Naive thymus-derived CD4-positive, alpha-beta T cell (primary cell): ENCODE measurements at regions of chr16 and their contacts with region 1.

Region 1: DNA sequence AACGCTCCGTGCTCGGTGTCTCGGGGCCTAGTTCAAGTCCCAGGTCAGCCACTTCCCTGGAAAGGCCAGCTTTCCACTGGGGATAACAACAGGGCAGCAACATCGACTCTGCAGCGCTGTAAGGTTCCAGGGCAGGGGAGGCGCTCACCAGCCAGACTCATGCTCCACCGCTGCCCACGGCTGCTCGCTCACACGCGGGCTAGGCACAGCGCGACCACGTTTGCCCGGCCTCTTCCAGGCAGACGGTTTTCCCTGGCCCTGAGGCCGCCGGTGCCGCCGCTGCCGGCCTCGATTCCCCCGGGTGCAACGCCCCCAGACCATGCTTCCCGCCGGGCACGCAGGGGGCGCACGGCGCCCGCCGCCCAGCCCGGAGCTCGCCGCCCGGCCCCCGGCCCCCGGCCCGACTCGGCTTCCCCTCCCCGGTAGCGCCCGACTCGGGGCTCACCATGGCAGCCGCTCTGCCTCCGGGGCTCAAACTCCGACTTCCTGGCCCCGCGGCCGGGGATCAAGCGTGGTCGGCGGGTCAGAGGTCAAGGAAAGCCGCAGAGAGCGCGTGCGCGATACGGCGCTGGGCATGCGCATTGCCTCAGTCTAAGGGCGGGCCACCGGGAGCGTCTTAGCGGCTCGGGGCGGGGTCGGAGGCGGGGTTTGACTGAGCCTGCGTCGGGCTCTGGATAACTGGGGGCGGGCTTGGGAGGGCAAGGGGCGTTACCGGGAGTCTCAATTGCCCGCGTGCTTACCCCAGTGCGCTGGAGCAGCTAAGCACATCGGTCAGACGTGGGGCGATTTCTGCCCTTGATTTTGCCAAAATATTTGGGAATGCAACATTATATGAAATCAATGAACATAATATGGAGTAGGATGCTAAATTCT is at the start of gene PAM16:
- DNase-seq: peak; percentile 95 to 99 (median 98)
- ATAC-seq: peak; percentile 93
- H3K4me3 ChIP-seq: peak within 1 kb of the TSS; percentile 91
- H3K4me3 Mint-ChIP-seq: peak within 1 kb of the TSS; percentile 90 to 98 (median 94)
- H3K27ac ChIP-seq: peak within 1 kb of the TSS; percentile 87
- H3K27ac Mint-ChIP-seq: peak within 1 kb of the TSS; percentile 76 to 95 (median 92)
- H3K4me1 ChIP-seq: peaks cover 5 to 7% of the 10 kb centered on the region in 2 donors
- H3K4me1 Mint-ChIP-seq: peaks cover 11 to 38% (median 32%) of the 10 kb centered on the region in 7 donors
- H3K27me3 ChIP-seq: no peaks in the 10 kb centered on the region
- H3K27me3 Mint-ChIP-seq: no peaks in the 10 kb centered on the region
- total RNA-seq, gene PAM16: 34.1 to 46.2 (median 45.0) TPM

Region 2: GRCh38 chr16:3182608-3183444 is 1168.2 kb before region 1 on chr16:
- CTCF ChIA-PET with region 1: no interaction called
- POLR2A ChIA-PET with region 1: no interaction called
- intact Hi-C with region 1: no loop called
- DNase-seq: peak in 5 of 9 donors; percentile 32 to 71 (median 43)
- ATAC-seq: peak; percentile 41
- H3K4me3 ChIP-seq: peak overlapping the region; percentile 58
- H3K4me3 Mint-ChIP-seq: peak overlapping the region; percentile 72 to 86 (median 79)
- H3K27ac ChIP-seq: no peak overlapping the region
- H3K27ac Mint-ChIP-seq: peak overlapping the region in 7 of 9 donors; percentile 22 to 86 (median 49)
- H3K4me1 ChIP-seq: peaks cover 8 to 16% of the 10 kb centered on the region in 2 donors
- H3K4me1 Mint-ChIP-seq: peaks cover 24 to 38% (median 27%) of the 10 kb centered on the region in 7 donors
- H3K27me3 ChIP-seq: peaks cover 4 to 26% of the 10 kb centered on the region in 2 donors
- H3K27me3 Mint-ChIP-seq: peaks cover 77 to 88% (median 81%) of the 10 kb centered on the region in 5 donors

Region 3: DNA sequence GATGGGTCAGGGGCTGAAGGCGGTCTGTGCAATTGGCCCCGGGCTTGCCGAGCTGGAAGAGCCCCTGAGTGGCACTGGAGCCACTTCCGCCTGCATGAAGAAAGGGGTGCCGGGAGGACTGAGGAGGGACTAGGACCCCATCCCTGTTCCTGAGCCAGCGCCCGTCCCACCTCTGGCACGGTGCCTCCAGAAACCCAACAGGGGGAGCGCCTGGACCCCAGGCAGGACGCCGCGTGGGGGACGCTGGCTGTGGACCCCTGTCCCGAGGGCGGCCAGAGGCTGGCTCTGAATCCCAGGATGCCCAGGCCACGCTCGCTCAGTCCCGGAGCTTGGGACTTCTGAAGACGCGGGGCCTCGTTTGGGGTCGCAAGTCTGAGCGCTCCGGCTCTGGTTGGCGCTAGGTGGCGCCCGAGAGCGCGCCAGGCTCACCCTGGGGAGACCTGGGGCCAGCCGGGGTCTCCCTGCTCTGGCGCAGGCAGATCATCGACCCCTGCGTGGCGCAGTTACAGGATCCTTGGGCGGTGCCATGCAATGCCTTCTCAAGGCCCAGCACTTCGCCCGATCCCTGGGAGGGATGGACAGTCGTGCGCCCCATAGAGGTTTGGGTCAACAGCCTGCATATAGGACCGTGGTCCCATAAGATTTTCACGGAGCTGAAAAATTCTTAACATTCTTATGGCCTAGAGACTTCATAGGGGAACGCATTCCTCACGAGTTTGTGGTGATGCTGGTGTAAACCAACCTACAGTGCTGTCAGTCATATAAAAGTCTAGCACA is 412.0 kb before region 1 on chr16:
- CTCF ChIA-PET with region 1: no interaction called
- POLR2A ChIA-PET with region 1: no interaction called
- intact Hi-C with region 1: no loop called
- DNase-seq: peak; percentile 39 to 79 (median 63)
- ATAC-seq: peak; percentile 89
- H3K4me3 ChIP-seq: peak overlapping the region; percentile 35
- H3K4me3 Mint-ChIP-seq: peak overlapping the region; percentile 5 to 75 (median 52)
- H3K27ac ChIP-seq: no peak overlapping the region
- H3K27ac Mint-ChIP-seq: no peak overlapping the region
- H3K4me1 ChIP-seq: no peaks in the 10 kb centered on the region
- H3K4me1 Mint-ChIP-seq: peaks cover 0 to 4% (median 0%) of the 10 kb centered on the region in 7 donors
- H3K27me3 ChIP-seq: no peaks in the 10 kb centered on the region
- H3K27me3 Mint-ChIP-seq: peaks cover 0 to 7% (median 0%) of the 10 kb centered on the region in 5 donors

Region 4: DNA sequence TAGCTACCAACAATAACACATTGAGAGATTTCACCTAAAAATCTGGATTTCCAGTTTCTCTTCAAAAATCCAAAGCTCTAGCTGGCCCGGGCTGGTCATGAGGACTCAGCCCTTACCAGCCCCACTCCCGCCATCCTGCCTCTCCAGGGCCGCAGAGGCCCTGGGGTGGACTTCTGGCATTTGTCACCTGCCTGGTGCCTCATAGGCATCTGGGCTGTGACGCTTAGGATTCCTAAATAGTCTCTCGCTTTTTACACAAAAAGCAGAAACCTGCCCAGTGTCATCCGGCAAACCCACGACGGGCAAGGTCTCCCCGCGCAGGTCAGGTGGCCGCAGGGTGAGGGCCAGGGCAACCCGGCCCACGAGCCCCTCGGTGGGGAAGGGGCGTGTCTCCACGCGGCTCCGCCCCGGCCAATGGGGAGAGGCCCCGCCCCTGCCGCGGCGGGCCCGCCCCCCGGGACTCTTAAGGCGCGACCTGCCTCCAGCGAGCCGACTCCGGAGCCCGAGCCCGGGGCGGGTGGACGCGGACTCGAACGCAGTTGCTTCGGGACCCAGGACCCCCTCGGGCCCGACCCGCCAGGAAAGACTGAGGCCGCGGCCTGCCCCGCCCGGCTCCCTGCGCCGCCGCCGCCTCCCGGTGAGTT is 20.5 kb after region 1 on chr16 and contains the start of gene VASN:
- CTCF ChIA-PET with region 1: no interaction called
- POLR2A ChIA-PET with region 1: no interaction called
- intact Hi-C with region 1: loop called (anchors 1 kb)
- DNase-seq: peak; percentile 68 to 84 (median 78)
- ATAC-seq: peak; percentile 89
- H3K4me3 ChIP-seq: peak within 1 kb of the TSS; percentile 51
- H3K4me3 Mint-ChIP-seq: peak within 1 kb of the TSS; percentile 61 to 88 (median 81)
- H3K27ac ChIP-seq: peak within 1 kb of the TSS; percentile 58
- H3K27ac Mint-ChIP-seq: peak within 1 kb of the TSS in 6 of 9 donors; percentile 43 to 74 (median 66)
- H3K4me1 ChIP-seq: peaks cover 15 to 19% of the 10 kb centered on the region in 2 donors
- H3K4me1 Mint-ChIP-seq: peaks cover 0 to 24% (median 12%) of the 10 kb centered on the region in 7 donors
- H3K27me3 ChIP-seq: no peaks in the 10 kb centered on the region
- H3K27me3 Mint-ChIP-seq: no peaks in the 10 kb centered on the region
- total RNA-seq, gene VASN: 0.24 to 1.3 (median 0.45) TPM in 4 of 5 experiments, not detected in the other

Region 5: DNA sequence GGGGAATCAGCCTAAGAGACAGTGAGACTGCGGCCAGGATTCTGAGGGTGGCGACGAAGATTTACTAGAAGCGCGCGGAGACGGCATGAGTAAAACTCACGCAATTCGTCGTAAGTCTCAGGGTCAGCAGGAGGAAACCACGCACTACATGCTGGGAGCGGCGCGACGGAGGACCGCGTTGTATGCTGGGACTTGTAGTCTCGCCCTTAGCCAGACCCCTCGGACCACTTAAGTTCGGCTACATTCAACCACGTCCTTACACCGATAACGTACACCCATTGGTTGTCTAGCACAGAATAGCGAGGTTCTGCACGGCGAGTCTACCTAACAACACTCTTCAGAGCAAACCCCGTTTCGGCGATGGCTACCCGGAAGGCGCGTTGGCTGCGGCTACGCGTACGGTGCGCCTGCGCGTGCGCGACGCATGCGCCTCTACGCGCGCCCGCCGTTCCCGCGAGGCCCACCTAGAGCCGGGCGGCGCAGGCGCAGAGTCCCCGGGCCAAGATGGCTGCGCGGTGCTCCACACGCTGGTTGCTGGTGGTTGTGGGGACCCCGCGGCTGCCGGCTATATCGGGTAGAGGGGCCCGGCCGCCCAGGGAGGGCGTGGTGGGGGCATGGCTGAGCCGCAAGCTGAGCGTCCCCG is 74.5 kb after region 1 on chr16 and contains the start of gene DNAJA3:
- CTCF ChIA-PET with region 1: no interaction called
- POLR2A ChIA-PET with region 1: no interaction called
- intact Hi-C with region 1: loop called in 1 of 2 experiments (anchors 2 kb)
- DNase-seq: peak; percentile 91 to 97 (median 95)
- ATAC-seq: peak; percentile 93
- H3K4me3 ChIP-seq: peak within 1 kb of the TSS; percentile 97
- H3K4me3 Mint-ChIP-seq: peak within 1 kb of the TSS; percentile 92 to 99 (median 98)
- H3K27ac ChIP-seq: peak within 1 kb of the TSS; percentile 95
- H3K27ac Mint-ChIP-seq: peak within 1 kb of the TSS; percentile 99 to 100 (median 100)
- H3K4me1 ChIP-seq: peaks cover 18% of the 10 kb centered on the region in 2 donors
- H3K4me1 Mint-ChIP-seq: peaks cover 26 to 37% (median 31%) of the 10 kb centered on the region in 7 donors
- H3K27me3 ChIP-seq: no peaks in the 10 kb centered on the region
- H3K27me3 Mint-ChIP-seq: peaks cover 0 to 4% (median 0%) of the 10 kb centered on the region in 5 donors
- total RNA-seq, gene DNAJA3: 33.6 to 79.8 (median 70.5) TPM

Region 6: DNA sequence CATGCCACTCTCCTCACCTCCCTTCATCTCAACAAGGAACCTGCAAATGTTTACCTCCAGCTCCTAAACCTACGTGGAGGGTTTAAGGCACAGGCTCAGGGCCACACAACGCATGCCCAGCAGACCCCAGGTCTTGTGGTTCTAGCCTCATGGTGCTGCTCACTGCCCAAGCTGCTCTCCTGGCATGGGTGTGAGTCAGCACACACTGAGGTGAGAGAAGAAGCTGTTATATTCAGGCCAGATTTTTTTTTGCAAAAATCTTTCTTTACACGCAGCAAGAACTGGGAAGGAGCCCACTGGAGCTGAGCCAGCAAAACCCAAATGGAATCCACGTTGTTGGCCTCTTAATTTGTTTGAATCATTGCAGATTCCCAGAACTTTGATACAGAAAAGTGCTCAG is 199.6 kb after region 1 on chr16:
- CTCF ChIA-PET with region 1: no interaction called
- POLR2A ChIA-PET with region 1: no interaction called
- intact Hi-C with region 1: loop called in 1 of 2 experiments (anchors 2 kb)
- DNase-seq: no peak
- ATAC-seq: no peak
- H3K4me3 ChIP-seq: no peak overlapping the region
- H3K4me3 Mint-ChIP-seq: no peak overlapping the region
- H3K27ac ChIP-seq: no peak overlapping the region
- H3K27ac Mint-ChIP-seq: peak overlapping the region in 1 of 9 donors; percentile 36
- H3K4me1 ChIP-seq: peaks cover 0 to 7% of the 10 kb centered on the region in 2 donors
- H3K4me1 Mint-ChIP-seq: peaks cover 0 to 10% (median 5%) of the 10 kb centered on the region in 7 donors
- H3K27me3 ChIP-seq: no peaks in the 10 kb centered on the region
- H3K27me3 Mint-ChIP-seq: peaks cover 0 to 6% (median 0%) of the 10 kb centered on the region in 5 donors

Region 7: DNA sequence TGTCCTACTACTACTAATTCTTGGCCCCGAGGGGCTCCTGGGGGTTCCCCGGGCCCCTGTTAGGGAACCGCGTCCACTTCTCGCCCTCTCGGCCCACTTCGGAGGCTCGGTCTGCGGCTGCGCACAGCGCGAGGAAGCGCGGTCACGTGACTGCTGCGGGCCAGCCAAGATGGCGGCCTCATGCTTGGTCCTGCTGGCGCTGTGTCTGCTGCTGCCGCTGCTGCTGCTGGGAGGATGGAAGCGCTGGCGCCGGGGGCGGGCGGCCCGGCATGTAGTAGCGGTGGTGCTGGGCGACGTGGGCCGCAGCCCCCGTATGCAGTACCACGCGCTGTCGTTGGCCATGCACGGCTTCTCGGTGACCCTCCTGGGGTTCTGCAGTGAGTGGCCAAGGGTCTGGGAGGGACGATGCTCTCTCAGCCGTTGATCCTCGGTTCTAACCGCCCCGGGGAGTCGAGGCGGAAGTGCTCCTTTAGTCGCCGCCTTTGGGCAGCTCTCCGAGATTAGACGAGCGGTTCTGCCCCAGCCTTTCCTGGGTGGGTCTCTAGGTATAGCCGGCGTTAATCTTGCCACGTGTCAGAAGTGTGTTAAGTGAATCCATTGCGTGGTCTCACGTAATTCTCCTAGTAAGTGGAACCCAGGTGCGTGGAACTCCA is 720.8 kb after region 1 on chr16 and contains the start of gene ALG1:
- CTCF ChIA-PET with region 1: no interaction called
- POLR2A ChIA-PET with region 1: no interaction called
- intact Hi-C with region 1: loop called in 1 of 2 experiments (anchors 10 kb)
- DNase-seq: peak; percentile 80 to 91 (median 87)
- ATAC-seq: peak; percentile 95
- H3K4me3 ChIP-seq: peak within 1 kb of the TSS; percentile 92
- H3K4me3 Mint-ChIP-seq: peak within 1 kb of the TSS; percentile 82 to 98 (median 95)
- H3K27ac ChIP-seq: peak within 1 kb of the TSS; percentile 77
- H3K27ac Mint-ChIP-seq: peak within 1 kb of the TSS; percentile 92 to 99 (median 96)
- H3K4me1 ChIP-seq: peaks cover 15 to 17% of the 10 kb centered on the region in 2 donors
- H3K4me1 Mint-ChIP-seq: peaks cover 23 to 44% (median 32%) of the 10 kb centered on the region in 7 donors
- H3K27me3 ChIP-seq: no peaks in the 10 kb centered on the region
- H3K27me3 Mint-ChIP-seq: peaks cover 0 to 3% (median 0%) of the 10 kb centered on the region in 5 donors
- total RNA-seq, gene ALG1: 12.9 to 29.1 (median 22.1) TPM